Naive thymus-derived CD4-positive, alpha-beta T cell (primary cell): ENCODE measurements at regions of chr5 and their contacts with region 1.

Region 1: GRCh38 chr5:134176511-134177368 is at the start of gene SKP1:
- DNase-seq: peak; percentile 80 to 93 (median 91)
- ATAC-seq: peak; percentile 92
- H3K4me3 ChIP-seq: peak within 1 kb of the TSS; percentile 96
- H3K4me3 Mint-ChIP-seq: peak within 1 kb of the TSS; percentile 90 to 99 (median 97)
- H3K27ac ChIP-seq: peak within 1 kb of the TSS; percentile 100
- H3K27ac Mint-ChIP-seq: peak within 1 kb of the TSS; percentile 98 to 99 (median 98)
- H3K4me1 ChIP-seq: peaks cover 25 to 30% of the 10 kb centered on the region in 2 donors
- H3K4me1 Mint-ChIP-seq: peaks cover 28 to 39% (median 32%) of the 10 kb centered on the region in 7 donors
- H3K27me3 ChIP-seq: no peaks in the 10 kb centered on the region
- H3K27me3 Mint-ChIP-seq: peaks cover 0 to 4% (median 0%) of the 10 kb centered on the region in 5 donors
- total RNA-seq, gene SKP1: 224 to 287 (median 268) TPM

Region 2: GRCh38 chr5:133081703-133082102 is 1095.0 kb before region 1 on chr5:
- CTCF ChIA-PET with region 1: no interaction called
- POLR2A ChIA-PET with region 1: no interaction called
- intact Hi-C with region 1: loop called in 1 of 2 experiments (anchors 5 kb)
- DNase-seq: no peak
- ATAC-seq: no peak
- H3K4me3 ChIP-seq: no peak overlapping the region
- H3K4me3 Mint-ChIP-seq: no peak overlapping the region
- H3K27ac ChIP-seq: no peak overlapping the region
- H3K27ac Mint-ChIP-seq: peak overlapping the region in 5 of 9 donors; percentile 25 to 56 (median 43)
- H3K4me1 ChIP-seq: no peaks in the 10 kb centered on the region
- H3K4me1 Mint-ChIP-seq: peaks cover 11 to 32% (median 26%) of the 10 kb centered on the region in 7 donors
- H3K27me3 ChIP-seq: no peaks in the 10 kb centered on the region
- H3K27me3 Mint-ChIP-seq: no peaks in the 10 kb centered on the region

Region 3: DNA sequence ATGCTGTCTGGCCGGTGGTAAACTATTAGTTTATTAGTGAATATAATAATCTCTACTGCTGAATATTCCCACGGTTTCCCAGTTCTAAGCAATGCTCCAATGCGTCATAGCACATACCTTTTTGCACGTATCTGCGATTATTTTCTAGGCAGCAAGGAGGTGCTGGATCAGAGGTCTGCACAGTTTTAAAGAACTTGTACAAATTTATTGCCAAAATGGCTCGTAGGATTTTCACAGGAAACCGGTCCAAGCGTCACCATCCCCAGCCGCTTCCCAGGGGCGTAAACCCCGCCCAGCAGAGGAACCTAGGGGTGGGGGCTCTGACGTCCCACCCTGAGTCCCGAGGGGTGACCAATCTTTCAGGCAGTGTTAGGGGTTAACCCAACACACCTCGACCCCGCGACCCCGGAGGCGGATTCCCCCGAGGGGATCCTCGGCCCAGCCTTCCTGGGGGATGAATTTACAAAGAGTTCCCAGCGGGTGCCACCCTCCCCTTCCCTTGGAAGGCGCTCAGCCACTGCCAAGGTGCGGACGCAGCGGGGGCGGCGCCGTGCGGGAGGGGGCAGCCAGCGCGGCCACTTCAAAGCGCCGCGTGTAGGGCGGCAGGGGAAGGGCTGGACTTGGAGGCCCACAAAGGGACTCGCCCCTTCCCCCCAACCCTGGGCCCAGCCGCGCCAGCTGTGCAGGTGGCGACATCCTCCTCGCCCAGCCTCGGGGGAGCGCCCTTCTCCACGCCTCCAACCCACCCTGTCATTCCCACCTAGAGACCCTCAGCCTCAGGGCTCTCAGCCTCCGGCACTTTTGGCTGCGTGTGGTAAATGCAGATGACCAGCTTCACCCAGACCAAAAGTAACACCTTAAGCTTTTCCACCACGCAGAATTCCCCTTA is 105.8 kb before region 1 on chr5:
- CTCF ChIA-PET with region 1: interaction called, 3 read pairs
- POLR2A ChIA-PET with region 1: interaction called, 10 read pairs
- intact Hi-C with region 1: no loop called
- DNase-seq: peak in 5 of 9 donors; percentile 27 to 61 (median 41)
- ATAC-seq: peak; percentile 50
- H3K4me3 ChIP-seq: peak overlapping the region; percentile 62
- H3K4me3 Mint-ChIP-seq: peak overlapping the region; percentile 74 to 95 (median 87)
- H3K27ac ChIP-seq: peak overlapping the region; percentile 72
- H3K27ac Mint-ChIP-seq: peak overlapping the region; percentile 79 to 99 (median 95)
- H3K4me1 ChIP-seq: peaks cover 18 to 75% of the 10 kb centered on the region in 2 donors
- H3K4me1 Mint-ChIP-seq: peaks cover 44 to 95% (median 78%) of the 10 kb centered on the region in 7 donors
- H3K27me3 ChIP-seq: no peaks in the 10 kb centered on the region
- H3K27me3 Mint-ChIP-seq: peaks cover 0 to 23% (median 0%) of the 10 kb centered on the region in 5 donors

Region 4: DNA sequence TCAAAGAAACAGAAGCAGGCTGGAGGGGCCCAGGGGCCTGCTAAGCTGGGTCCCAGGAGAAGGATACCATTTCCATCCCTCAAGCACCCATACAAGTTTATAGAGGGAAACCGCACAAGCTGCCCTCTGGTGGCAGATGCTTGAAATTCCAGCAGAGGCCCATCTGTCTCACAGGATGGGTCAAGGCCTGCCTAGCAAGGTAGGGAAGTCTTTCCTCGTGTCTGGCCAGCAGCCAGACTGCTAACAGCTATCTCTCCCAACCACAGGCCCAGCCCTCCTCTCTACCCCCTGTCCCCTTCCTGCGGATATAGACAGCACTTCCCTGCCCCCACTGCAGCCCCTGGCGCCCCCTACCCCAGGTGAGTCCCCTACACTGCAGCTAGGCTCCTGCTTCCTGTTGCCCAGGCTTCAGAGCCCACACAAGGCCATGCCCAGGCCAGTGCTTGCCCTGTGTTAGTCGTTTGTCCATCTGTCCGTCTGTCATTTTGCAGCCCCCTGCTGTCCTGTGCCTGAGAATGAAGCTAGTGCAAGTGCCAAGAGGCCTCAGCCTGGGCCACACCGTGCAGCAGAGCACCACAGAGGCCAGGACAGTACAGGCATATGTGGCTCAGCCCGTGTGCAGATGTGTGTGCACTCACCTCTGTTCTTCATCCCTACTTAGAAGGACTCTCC is 36.1 kb before region 1 on chr5:
- CTCF ChIA-PET with region 1: no interaction called
- POLR2A ChIA-PET with region 1: interaction called, 164 read pairs
- intact Hi-C with region 1: no loop called
- DNase-seq: peak in 5 of 9 donors; percentile 30 to 63 (median 50)
- ATAC-seq: peak; percentile 67
- H3K4me3 ChIP-seq: no peak overlapping the region
- H3K4me3 Mint-ChIP-seq: peak overlapping the region in 5 of 10 donors; percentile 21 to 58 (median 41)
- H3K27ac ChIP-seq: peak overlapping the region; percentile 97
- H3K27ac Mint-ChIP-seq: peak overlapping the region; percentile 60 to 99 (median 90)
- H3K4me1 ChIP-seq: peaks cover 38 to 61% of the 10 kb centered on the region in 2 donors
- H3K4me1 Mint-ChIP-seq: peaks cover 36 to 81% (median 60%) of the 10 kb centered on the region in 7 donors
- H3K27me3 ChIP-seq: no peaks in the 10 kb centered on the region
- H3K27me3 Mint-ChIP-seq: peaks cover 0 to under 1% (median 0%) of the 10 kb centered on the region in 5 donors

Region 5: DNA sequence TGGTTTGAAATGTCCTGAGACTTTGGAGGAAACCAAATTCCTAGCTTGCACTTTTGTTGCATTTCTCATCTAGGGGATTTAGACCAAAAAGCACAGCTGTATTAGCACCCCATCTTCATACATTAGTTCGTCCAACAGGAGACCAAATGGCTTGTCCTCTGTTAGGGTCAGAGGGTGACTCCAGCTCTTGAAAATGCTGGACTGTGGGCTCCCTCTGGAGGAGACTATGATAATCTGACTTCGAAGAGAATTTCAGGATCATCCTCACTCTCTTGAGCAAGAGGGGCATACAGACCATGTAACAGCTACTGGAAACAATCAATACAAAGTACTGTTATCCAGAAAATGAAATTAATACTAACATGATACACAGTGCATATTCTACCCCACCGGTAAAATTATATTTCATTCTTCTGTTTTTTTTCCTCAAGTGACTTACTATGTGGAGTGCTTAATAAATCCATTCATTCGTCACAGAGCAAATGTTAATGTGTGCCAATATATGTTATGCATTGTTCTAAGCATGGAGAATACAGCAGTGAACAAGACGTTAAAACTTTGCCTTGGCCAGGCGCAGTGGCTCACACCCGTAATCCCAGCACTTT is 112.9 kb after region 1 on chr5:
- CTCF ChIA-PET with region 1: interaction called, 3 read pairs
- POLR2A ChIA-PET with region 1: no interaction called
- intact Hi-C with region 1: loop called in 1 of 2 experiments (anchors 2 kb)
- DNase-seq: peak in 7 of 9 donors; percentile 13 to 61 (median 50)
- ATAC-seq: peak; percentile 91
- H3K4me3 ChIP-seq: no peak overlapping the region
- H3K4me3 Mint-ChIP-seq: no peak overlapping the region
- H3K27ac ChIP-seq: no peak overlapping the region
- H3K27ac Mint-ChIP-seq: no peak overlapping the region
- H3K4me1 ChIP-seq: no peaks in the 10 kb centered on the region
- H3K4me1 Mint-ChIP-seq: peaks cover 0 to 6% (median 0%) of the 10 kb centered on the region in 7 donors
- H3K27me3 ChIP-seq: no peaks in the 10 kb centered on the region
- H3K27me3 Mint-ChIP-seq: peaks cover 0 to 39% (median 3%) of the 10 kb centered on the region in 5 donors

Region 6: GRCh38 chr5:134648425-134649162 is 471.9 kb after region 1 on chr5 and contains the start of gene SEC24A:
- CTCF ChIA-PET with region 1: no interaction called
- POLR2A ChIA-PET with region 1: no interaction called
- intact Hi-C with region 1: loop called in 1 of 2 experiments (anchors 1 kb)
- DNase-seq: peak; percentile 83 to 93 (median 86)
- ATAC-seq: peak; percentile 92
- H3K4me3 ChIP-seq: peak within 1 kb of the TSS; percentile 76
- H3K4me3 Mint-ChIP-seq: peak within 1 kb of the TSS; percentile 89 to 100 (median 98)
- H3K27ac ChIP-seq: peak within 1 kb of the TSS; percentile 91
- H3K27ac Mint-ChIP-seq: peak within 1 kb of the TSS; percentile 94 to 100 (median 99)
- H3K4me1 ChIP-seq: peaks cover 7 to 9% of the 10 kb centered on the region in 2 donors
- H3K4me1 Mint-ChIP-seq: peaks cover 13 to 40% (median 26%) of the 10 kb centered on the region in 7 donors
- H3K27me3 ChIP-seq: no peaks in the 10 kb centered on the region
- H3K27me3 Mint-ChIP-seq: no peaks in the 10 kb centered on the region
- total RNA-seq, gene SEC24A: 13.6 to 30.9 (median 16.0) TPM

Region 7: DNA sequence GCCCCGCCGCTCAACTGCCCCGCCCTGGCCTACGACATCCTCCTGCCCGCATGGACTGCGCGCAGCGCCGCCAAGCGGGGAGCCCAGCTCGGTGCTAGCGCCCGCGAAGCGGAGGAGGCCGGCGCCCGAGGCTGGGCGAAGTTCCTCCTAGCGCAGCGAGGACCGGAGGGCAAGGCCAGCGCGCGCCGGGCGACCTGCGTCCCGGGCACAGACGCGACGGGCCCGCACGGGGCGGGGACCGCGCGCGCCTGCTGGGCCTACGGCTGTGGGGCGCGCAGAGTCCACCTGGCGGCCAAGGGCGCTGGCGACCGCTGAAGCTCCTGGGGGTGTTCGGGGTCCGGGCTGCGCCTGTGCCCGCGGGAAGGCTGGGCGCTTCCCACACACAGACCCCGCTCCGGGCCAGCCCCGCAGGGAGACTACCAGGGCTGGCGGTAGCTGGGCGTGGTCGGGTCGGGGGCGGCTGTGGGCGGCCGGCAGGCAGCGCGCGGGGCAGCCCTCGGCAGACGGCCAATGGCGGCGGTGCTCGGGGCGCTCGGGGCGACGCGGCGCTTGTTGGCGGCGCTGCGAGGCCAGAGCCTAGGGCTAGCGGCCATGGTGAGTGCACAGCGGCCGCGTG is 728.0 kb after region 1 on chr5 and contains the start of gene PCBD2:
- CTCF ChIA-PET with region 1: no interaction called
- POLR2A ChIA-PET with region 1: no interaction called
- intact Hi-C with region 1: loop called in 1 of 2 experiments (anchors 1 kb)
- DNase-seq: peak; percentile 83 to 96 (median 90)
- ATAC-seq: peak; percentile 94
- H3K4me3 ChIP-seq: peak within 1 kb of the TSS; percentile 71
- H3K4me3 Mint-ChIP-seq: peak within 1 kb of the TSS; percentile 90 to 99 (median 96)
- H3K27ac ChIP-seq: peak within 1 kb of the TSS; percentile 90
- H3K27ac Mint-ChIP-seq: peak within 1 kb of the TSS; percentile 93 to 100 (median 99)
- H3K4me1 ChIP-seq: no peaks in the 10 kb centered on the region
- H3K4me1 Mint-ChIP-seq: peaks cover 0 to 25% (median 5%) of the 10 kb centered on the region in 7 donors
- H3K27me3 ChIP-seq: no peaks in the 10 kb centered on the region
- H3K27me3 Mint-ChIP-seq: no peaks in the 10 kb centered on the region
- total RNA-seq, gene PCBD2: 10.6 to 15.8 (median 14.3) TPM